AG04450 (cell line): ENCODE measurements at regions of chr19 and their contacts with region 1.

Region 1: DNA sequence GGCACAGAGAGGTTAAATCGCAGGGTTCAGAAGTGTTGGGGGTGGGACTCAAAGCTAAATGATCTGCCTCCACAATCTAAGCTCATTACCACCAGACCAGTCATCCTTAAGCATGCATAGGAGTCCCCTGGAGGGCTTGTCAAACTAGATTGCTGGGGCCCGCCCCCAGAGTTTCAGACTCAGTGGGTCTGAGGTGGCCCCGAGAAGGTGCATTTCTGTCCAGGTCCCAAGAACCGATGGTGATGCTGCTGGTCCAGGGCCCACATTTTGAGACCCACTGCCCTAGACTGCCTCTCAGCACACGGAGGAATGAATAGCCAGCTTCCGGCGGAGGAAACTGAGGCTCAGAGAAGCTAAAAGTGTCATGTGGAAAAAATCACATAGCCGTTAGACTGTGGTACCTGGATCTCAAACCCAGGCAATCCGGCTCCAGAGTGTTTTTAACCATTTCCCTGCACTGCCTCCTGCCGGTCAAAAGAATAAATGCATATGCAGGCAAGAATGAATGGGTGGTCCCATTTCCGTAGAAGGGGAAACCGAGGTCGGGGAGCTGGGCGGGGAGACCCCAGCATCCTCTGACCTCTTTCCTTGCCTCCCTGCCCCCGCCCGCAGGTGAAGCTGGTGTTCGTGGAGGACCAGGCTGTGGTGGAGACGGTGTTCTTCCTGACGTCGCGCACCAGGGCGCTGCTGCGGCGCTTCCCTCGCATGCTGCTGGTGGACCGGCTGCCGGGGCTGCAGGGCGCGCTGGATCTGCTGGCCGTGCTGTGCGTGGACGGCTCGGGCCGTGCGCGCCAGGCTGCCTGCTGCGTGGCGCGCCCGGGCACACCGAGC is 23.8 kb downstream of the ZSWIM9 start:
- DNase-seq: no peak
- H3K4me3 ChIP-seq: no peak overlapping the region
- H3K27ac ChIP-seq: no peak overlapping the region
- H3K27me3 ChIP-seq: no peaks in the 10 kb centered on the region
- CTCF ChIP-seq: peak; percentile 64

Region 2: GRCh38 chr19:48170038-48170812 is 24.0 kb before region 1 on chr19 and contains the starts of genes LIG1 and ZSWIM9:
- CTCF ChIA-PET with region 1: interaction called, 13 read pairs
- POLR2A ChIA-PET with region 1: no interaction called
- DNase-seq: peak; percentile 93
- H3K4me3 ChIP-seq: peak within 1 kb of the TSS; percentile 92
- H3K27ac ChIP-seq: peak within 1 kb of the TSS; percentile 80
- H3K27me3 ChIP-seq: no peaks in the 10 kb centered on the region
- CTCF ChIP-seq: 0 out of 2 replicates have a peak, but pooled peaks have one; percentile 4
- polyA plus RNA-seq, gene LIG1: 7.6 and 8.2 TPM in 2 replicates
- polyA plus RNA-seq, gene ZSWIM9: 0.66 and 0.83 TPM in 2 replicates

Region 3: DNA sequence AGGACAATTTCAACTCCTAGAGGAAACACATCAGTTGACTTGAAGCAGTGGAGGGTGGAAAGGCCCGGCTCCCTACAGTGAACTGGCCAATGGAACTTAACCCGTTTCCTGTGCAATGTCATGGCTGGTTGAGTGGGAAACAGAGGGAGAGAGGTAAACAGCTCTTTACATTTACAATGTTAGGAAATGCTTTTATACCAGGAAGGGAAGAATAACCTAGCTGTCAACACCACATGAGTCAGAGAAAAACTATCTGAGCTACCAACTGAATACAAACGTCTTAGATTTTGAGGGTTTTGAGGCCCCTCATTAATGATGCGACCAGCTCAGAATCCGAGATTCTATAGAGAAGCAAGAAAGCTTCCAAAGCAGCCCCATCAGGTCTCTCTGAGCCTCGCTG is 24.7 kb after region 1 on chr19:
- CTCF ChIA-PET with region 1: no interaction called
- POLR2A ChIA-PET with region 1: no interaction called
- DNase-seq: no peak
- H3K4me3 ChIP-seq: no peak overlapping the region
- H3K27ac ChIP-seq: no peak overlapping the region
- H3K27me3 ChIP-seq: no peaks in the 10 kb centered on the region
- CTCF ChIP-seq: no peak

Region 4: GRCh38 chr19:48333467-48334384 is 139.5 kb after region 1 on chr19:
- CTCF ChIA-PET with region 1: no interaction called
- POLR2A ChIA-PET with region 1: no interaction called
- DNase-seq: peak; percentile 87
- H3K4me3 ChIP-seq: peak overlapping the region; percentile 57
- H3K27ac ChIP-seq: peak overlapping the region; percentile 68
- H3K27me3 ChIP-seq: no peaks in the 10 kb centered on the region
- CTCF ChIP-seq: peak; percentile 80